Mammary epithelial cell (primary cell): ENCODE measurements at regions of chr6 and their contacts with region 1.

Region 1: GRCh38 chr6:17808609-17809008 is 101.9 kb upstream of the NUP153 start:
- DNase-seq: no peak
- H3K4me3 ChIP-seq: no peak overlapping the region
- H3K27ac ChIP-seq: no peak overlapping the region
- H3K4me1 ChIP-seq: no peaks in the 10 kb centered on the region
- H3K27me3 ChIP-seq: no peaks in the 10 kb centered on the region
- CTCF ChIP-seq: no peak

Region 2: DNA sequence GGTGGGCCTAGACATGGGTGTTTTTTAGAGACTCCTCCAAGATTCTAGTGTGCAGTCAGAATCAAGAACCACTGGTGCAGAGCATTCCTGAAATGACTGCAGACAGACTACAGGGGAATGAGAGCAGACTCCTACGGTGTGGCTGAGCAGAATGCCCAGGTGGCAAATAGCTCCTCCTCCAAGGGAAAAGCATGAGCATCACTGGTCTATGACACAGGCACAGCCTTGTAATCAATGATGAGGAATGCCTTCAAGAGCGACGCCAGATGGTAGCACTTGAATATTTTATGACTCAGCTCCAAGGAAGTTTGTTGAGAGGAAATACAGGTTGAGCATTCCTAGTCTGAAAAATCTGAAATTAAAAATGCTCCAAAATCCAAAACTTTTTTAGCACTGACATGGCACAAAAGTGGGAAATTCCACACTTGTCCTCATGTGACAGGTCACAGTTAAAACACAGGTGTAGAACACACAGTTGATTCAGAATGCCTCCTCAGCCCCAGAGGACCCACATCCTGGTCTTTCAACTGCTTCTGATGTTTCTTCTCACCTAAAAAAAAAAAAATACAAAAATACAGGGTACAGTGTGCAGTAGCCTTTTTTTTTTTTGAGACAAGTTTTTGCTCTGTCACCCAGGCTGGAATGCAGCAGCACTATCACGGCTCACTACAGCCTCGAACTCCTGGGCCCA is 219.1 kb before region 1 on chr6:
- CTCF ChIA-PET with region 1: interaction called, 18 read pairs
- dilution Hi-C with region 1: no loop called
- in situ Hi-C with region 1: no loop called
- intact Hi-C with region 1: loop called (anchors 2 kb)
- DNase-seq: peak; percentile 91
- H3K4me3 ChIP-seq: no peak overlapping the region
- H3K27ac ChIP-seq: peak overlapping the region; percentile 42
- H3K4me1 ChIP-seq: peaks cover 12% of the 10 kb centered on the region
- H3K27me3 ChIP-seq: no peaks in the 10 kb centered on the region
- CTCF ChIP-seq: peak in 1 of 2 donors; percentile 32

Region 3: DNA sequence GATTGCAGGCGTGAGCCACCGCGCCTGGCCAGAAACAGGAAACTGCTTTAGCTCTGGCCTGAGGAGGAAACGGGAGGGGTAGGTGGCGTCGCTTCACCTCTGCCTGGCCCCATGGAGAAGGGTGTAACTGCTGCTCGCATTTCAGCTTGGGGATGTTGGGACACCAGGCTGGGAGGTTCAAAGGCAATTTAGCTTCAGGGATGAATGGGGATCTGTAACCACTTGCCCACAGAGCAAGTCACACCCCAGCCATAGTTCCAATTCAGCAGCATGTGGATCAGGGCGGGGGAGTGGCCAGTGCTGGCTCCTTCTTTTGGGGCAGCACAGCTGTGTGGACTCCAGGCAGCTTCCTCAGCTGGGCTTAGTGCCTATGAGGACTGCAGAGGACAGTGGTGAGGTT is 67.1 kb before region 1 on chr6:
- CTCF ChIA-PET with region 1: no interaction called
- dilution Hi-C with region 1: no loop called
- in situ Hi-C with region 1: no loop called
- intact Hi-C with region 1: no loop called
- DNase-seq: peak; percentile 52
- H3K4me3 ChIP-seq: no peak overlapping the region
- H3K27ac ChIP-seq: no peak overlapping the region
- H3K4me1 ChIP-seq: peaks cover 8% of the 10 kb centered on the region
- H3K27me3 ChIP-seq: no peaks in the 10 kb centered on the region
- CTCF ChIP-seq: no peak

Region 4: DNA sequence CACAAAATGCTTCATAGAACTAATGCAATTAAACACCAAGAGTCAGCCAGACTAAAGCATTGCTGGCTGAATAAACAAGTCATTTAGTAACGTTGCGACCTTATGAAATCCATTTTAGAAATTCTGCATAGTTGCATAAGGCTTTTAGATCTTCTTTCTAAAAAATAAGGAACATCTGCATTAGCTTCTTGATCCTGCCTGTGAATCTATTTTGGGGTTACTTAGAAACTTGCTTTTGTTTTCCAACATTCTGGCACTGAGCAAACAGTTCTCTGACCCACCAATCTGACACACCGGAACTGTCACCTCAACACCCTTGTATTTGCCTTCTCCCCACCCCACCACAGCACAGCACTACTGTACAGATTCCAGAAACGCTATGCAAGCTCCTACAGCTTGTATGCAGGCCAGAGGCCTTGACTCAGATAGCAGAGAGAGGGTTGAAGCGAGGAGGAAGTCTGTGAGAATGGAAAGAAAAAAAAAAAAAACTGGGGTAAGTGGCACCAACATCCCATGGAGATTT is 123.8 kb after region 1 on chr6:
- CTCF ChIA-PET with region 1: no interaction called
- dilution Hi-C with region 1: no loop called
- in situ Hi-C with region 1: no loop called
- intact Hi-C with region 1: no loop called
- DNase-seq: peak; percentile 57
- H3K4me3 ChIP-seq: no peak overlapping the region
- H3K27ac ChIP-seq: peak overlapping the region; percentile 12
- H3K4me1 ChIP-seq: peaks cover 18% of the 10 kb centered on the region
- H3K27me3 ChIP-seq: no peaks in the 10 kb centered on the region
- CTCF ChIP-seq: no peak

Region 5: GRCh38 chr6:18166312-18167036 is 357.9 kb after region 1 on chr6:
- CTCF ChIA-PET with region 1: interaction called, 25 read pairs
- dilution Hi-C with region 1: no loop called
- in situ Hi-C with region 1: no loop called
- intact Hi-C with region 1: no loop called
- DNase-seq: no peak
- H3K4me3 ChIP-seq: no peak overlapping the region
- H3K27ac ChIP-seq: no peak overlapping the region
- H3K4me1 ChIP-seq: no peaks in the 10 kb centered on the region
- H3K27me3 ChIP-seq: no peaks in the 10 kb centered on the region
- CTCF ChIP-seq: no peak